ENCODE measurements at regions of chr15 and their contacts with region 1.

Region 1: GRCh38 chr15:74906446-74907162 is at the start of gene FAM219B:
- DNase-seq: peak; percentile 81
- H3K4me3 Mint-ChIP-seq: peak within 1 kb of the TSS; percentile 92
- H3K27ac Mint-ChIP-seq: peak within 1 kb of the TSS; percentile 87
- H3K4me1 Mint-ChIP-seq: peaks cover 44% of the 10 kb centered on the region
- H3K27me3 Mint-ChIP-seq: no peaks in the 10 kb centered on the region
- total RNA-seq, gene FAM219B: 72.6 and 73.2 TPM in 2 replicates

Region 2: DNA sequence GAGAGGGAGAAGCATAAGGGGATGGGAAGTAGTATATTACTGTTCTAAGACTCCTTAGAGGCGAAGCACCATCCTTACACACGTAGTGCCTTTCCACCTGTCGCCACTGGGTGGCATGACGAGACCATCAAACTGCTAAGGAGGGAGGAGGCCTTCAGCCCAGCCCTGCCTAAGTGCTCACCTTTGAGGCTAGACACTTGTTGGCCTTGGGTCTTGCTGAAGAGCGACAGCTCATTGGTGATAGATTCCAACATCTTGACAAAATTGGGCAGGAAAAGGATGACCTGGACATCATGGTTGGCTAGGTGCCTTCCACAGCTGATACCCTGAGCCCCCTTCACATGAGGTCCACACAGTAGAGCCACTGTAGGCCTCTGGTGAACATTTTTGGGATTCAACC is 271.4 kb before region 1 on chr15:
- intact Hi-C with region 1: loop called (anchors 2 kb)
- DNase-seq: peak; percentile 61
- H3K4me3 Mint-ChIP-seq: no peak overlapping the region
- H3K27ac Mint-ChIP-seq: no peak overlapping the region
- H3K4me1 Mint-ChIP-seq: peaks cover 11% of the 10 kb centered on the region
- H3K27me3 Mint-ChIP-seq: no peaks in the 10 kb centered on the region

Region 3: DNA sequence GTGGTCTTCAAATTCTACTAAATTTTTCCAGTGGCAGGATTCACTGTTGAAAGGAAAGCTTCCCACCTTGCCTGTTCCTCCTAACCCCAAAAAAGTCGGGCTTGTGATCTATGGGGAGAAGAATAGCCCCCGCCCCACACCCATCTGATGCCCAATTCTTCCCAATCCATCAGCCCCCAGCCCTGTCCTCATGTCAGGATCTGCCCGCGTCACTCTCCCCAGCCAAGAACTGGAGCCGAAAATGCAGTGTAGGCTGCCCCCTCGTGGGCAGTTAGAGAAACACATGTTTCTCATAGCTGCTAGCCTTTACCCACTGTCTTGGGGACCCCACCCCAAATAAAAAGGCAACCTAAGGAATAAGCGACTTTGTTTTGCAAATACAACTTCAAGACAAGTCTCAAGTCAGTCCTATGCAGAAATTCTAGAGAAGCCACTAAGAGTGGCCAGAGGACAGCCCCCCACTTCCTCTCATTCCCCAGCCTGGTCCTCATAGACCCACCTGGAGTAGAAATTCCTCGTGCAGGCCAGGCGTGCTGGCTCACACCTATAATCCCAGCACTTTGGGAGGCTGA is 137.7 kb before region 1 on chr15:
- intact Hi-C with region 1: loop called (anchors 1 kb)
- DNase-seq: no peak
- H3K4me3 Mint-ChIP-seq: no peak overlapping the region
- H3K27ac Mint-ChIP-seq: no peak overlapping the region
- H3K4me1 Mint-ChIP-seq: peaks cover 34% of the 10 kb centered on the region
- H3K27me3 Mint-ChIP-seq: peaks cover 11% of the 10 kb centered on the region

Region 4: DNA sequence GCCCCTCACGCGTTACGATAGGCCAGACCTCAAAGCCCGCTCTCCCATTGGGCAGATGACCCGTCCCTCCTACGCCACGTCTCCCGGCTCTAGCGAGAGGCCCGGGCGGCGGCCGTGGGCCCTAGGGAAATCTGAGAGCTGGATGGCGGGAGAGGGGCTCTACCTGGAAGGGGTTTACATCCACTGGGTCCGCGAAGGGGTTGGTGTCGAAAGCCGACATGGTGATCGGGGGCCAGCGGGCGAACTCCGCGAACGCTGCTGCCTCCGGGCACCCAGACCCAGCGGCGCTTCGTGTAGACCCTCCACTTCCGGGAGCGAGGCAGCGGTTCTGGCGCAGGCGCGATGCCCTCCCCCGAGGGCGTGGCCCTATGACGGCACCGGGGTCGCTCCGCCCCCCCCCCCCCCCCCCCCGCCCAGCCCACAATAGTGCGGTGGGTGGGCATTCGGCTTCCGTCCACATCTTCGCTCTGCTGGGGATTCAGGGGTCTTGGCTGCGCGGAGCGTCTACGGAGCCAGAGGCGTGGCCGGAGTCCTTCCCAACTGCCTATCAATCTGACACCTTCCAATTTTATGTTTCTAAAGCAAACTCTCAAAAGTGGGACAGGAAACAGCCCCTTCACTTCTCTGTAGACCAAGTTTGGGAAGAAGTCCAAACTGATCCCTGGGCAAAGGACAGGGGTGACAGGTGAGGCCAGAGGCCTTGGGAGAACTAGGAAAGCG is 33.4 kb before region 1 on chr15 and contains the start of gene SCAMP2:
- intact Hi-C with region 1: loop called (anchors 1 kb)
- DNase-seq: peak; percentile 86
- H3K4me3 Mint-ChIP-seq: peak within 1 kb of the TSS; percentile 97
- H3K27ac Mint-ChIP-seq: peak within 1 kb of the TSS; percentile 86
- H3K4me1 Mint-ChIP-seq: peaks cover 34% of the 10 kb centered on the region
- H3K27me3 Mint-ChIP-seq: peaks cover 4% of the 10 kb centered on the region
- total RNA-seq, gene SCAMP2: 93.7 and 103 TPM in 2 replicates

Region 5: DNA sequence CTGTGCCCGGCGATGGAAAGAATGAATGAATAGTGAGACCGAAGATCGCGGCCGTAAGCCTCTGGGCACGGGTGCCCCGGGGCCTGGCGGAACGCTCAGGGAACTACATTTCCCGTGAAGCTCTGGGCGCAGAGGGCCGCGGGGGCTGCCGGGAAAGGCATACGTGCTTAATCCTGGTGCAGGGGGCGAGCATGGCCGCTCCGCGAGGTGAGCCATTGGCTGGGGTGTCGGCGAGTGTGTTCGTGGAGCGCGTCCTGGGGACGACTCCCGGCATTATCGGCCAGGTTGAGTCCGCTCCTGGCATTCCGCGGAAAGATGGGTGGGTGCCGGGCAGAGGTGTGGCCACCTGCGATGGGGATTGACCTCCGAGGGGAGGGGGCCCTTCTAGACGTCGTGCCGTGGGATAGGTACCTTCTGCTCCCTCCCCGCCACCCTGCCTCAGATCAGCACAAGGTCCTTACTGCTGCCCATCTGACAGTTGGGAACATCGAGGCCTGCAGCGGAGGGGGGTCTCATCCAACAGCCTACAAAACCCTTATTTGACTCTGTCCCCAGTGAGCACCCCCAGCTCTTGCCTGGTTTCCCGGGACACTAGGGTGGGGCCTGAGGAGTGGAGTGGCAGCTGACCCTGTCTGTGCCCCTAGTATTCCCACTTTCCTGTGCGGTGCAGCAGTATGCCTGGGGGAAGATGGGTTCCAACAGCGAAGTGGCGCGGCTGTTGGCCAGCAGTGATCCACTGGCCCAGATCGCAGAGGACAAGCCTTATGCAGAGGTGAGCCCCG is 16.5 kb before region 1 on chr15 and contains the start of gene MPI:
- intact Hi-C with region 1: loop called (anchors 1 kb)
- DNase-seq: peak; percentile 82
- H3K4me3 Mint-ChIP-seq: peak within 1 kb of the TSS; percentile 91
- H3K27ac Mint-ChIP-seq: peak within 1 kb of the TSS; percentile 92
- H3K4me1 Mint-ChIP-seq: peaks cover 47% of the 10 kb centered on the region
- H3K27me3 Mint-ChIP-seq: no peaks in the 10 kb centered on the region
- total RNA-seq, gene MPI: 57.7 and 62.8 TPM in 2 replicates

Region 6: GRCh38 chr15:74937596-74938296 is 31.1 kb after region 1 on chr15 and contains the start of gene COX5A:
- intact Hi-C with region 1: loop called (anchors 1 kb)
- DNase-seq: peak; percentile 91
- H3K4me3 Mint-ChIP-seq: peak within 1 kb of the TSS; percentile 91
- H3K27ac Mint-ChIP-seq: peak within 1 kb of the TSS; percentile 91
- H3K4me1 Mint-ChIP-seq: peaks cover 22% of the 10 kb centered on the region
- H3K27me3 Mint-ChIP-seq: no peaks in the 10 kb centered on the region
- total RNA-seq, gene COX5A: 273 and 290 TPM in 2 replicates

Region 7: DNA sequence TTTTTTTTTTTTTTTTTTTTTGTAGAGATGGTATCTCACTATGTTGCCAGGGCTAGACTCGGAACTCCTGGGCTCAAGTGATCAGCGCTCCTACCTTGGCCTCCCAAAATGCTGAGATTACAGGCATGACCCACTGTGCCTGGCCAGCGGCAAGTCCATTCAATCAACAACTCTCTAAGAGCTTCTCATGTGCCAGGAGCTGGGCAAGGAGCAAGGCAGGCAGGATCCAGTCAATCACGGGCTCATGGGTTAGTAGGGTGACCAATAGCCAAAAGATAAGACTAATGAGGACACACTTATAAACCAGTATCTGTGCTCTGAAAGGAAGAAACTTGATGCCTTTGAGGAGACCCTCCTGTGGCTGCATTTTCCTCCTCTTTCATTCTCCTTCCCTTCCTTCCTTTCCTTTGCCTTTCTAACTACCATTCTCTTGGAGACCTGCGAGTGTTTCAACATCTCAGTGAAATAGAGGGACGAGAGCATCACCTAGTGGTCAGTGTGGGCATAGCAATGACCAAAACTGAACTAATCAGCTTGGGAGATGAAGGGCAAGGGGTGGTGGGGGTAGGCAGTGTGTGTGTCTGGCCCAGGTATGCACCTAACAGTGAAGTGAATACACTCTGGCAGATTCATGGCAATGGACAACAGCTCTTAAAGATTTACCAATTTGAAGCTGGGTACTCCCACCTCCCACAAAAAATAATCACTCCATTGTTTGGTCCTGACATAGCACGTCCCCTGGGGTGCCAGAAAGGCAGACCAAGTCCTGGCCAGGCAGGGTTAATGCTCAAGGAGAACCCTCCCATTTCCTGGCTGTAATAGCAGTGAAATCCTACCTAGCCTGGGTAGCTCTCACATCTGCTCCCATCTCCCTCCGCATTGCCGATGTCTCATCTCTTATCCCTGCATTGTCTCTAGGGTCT is 43.7 kb after region 1 on chr15:
- intact Hi-C with region 1: loop called (anchors 1 kb)
- DNase-seq: peak; percentile 71
- H3K4me3 Mint-ChIP-seq: no peak overlapping the region
- H3K27ac Mint-ChIP-seq: no peak overlapping the region
- H3K4me1 Mint-ChIP-seq: peaks cover 11% of the 10 kb centered on the region
- H3K27me3 Mint-ChIP-seq: peaks cover 2% of the 10 kb centered on the region

Region 8: GRCh38 chr15:74995241-74995778 is 88.7 kb after region 1 on chr15 and contains the start of gene SCAMP5:
- intact Hi-C with region 1: no loop called
- DNase-seq: peak; percentile 92
- H3K4me3 Mint-ChIP-seq: peak within 1 kb of the TSS; percentile 70
- H3K27ac Mint-ChIP-seq: no peak within 1 kb of the TSS
- H3K4me1 Mint-ChIP-seq: peaks cover 4% of the 10 kb centered on the region
- H3K27me3 Mint-ChIP-seq: peaks cover 33% of the 10 kb centered on the region
- total RNA-seq, gene SCAMP5: 2.0 and 3.5 TPM in 2 replicates

Region 9: DNA sequence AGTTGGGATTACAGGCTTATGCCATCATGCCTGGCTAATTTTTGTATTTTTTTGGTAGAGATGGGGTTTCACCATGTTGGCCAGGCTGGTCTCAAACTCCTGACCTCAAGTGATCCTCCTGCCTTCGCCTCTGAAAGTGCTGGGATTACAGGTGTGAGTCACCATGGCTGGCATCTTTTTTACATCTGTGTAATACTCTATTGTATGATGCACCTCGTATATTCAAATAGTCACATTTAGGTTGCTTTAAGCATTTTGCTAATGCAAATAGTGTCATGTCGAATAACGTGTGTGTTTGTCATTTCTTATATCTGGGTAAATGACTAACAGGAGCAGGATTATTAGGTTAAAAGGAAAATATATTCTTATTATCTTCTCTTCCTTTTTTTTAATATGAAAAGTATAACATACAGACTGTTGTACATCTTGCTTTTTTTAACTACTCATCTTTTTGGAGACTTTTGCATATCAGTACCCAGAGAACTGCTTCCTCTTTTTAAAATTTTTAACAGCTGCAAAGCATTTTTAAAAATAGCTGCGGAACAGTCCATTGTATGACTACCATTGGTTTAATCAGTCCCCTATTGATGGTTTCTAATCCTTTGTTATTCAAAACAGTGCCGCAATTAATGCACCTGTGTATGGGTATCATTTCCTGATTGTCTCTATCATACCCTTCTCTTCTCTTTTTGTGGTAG is 102.2 kb after region 1 on chr15:
- intact Hi-C with region 1: no loop called
- DNase-seq: no peak
- H3K4me3 Mint-ChIP-seq: no peak overlapping the region
- H3K27ac Mint-ChIP-seq: no peak overlapping the region
- H3K4me1 Mint-ChIP-seq: no peaks in the 10 kb centered on the region
- H3K27me3 Mint-ChIP-seq: peaks cover 16% of the 10 kb centered on the region

Region 10: DNA sequence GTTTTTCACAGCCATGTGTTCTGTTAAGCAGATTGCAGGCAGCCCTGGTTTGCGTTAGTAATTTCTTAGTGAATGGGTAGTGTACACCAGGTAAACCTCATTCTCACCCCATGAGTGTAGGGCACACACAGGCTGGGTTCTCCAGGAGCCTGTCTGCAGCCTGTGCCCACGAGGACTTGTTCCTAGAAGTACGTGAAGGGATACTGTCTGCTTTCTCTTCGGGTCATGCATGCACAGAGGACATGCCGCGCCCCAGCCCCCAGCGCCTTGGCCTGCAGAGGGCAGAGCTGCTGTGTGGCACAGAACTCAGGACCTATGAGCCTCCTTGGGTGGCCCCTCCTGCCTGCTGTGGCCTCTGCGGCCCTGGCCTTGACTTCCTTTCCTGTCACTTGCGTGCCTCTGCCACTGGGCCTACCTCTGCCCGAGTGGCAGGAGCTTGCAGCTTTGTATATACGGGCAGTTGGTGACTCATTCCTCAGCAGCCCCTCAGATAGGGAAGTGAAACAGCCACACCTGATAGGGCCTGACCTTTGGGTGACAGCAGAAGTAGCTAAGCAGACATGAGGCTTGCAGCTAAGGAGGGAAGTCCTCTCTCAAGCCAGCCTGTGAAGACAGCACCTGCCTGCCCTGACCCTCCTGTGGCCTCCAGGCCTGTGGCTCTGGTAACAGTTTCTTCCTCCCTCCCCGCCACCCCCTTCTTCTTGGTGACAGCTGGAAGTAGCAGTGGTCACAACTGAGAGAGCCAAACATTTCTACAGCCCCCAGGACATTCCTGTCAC is 136.3 kb after region 1 on chr15:
- intact Hi-C with region 1: no loop called
- DNase-seq: peak; percentile 71
- H3K4me3 Mint-ChIP-seq: peak overlapping the region; percentile 41
- H3K27ac Mint-ChIP-seq: peak overlapping the region; percentile 77
- H3K4me1 Mint-ChIP-seq: peaks cover 87% of the 10 kb centered on the region
- H3K27me3 Mint-ChIP-seq: no peaks in the 10 kb centered on the region

Region 11: DNA sequence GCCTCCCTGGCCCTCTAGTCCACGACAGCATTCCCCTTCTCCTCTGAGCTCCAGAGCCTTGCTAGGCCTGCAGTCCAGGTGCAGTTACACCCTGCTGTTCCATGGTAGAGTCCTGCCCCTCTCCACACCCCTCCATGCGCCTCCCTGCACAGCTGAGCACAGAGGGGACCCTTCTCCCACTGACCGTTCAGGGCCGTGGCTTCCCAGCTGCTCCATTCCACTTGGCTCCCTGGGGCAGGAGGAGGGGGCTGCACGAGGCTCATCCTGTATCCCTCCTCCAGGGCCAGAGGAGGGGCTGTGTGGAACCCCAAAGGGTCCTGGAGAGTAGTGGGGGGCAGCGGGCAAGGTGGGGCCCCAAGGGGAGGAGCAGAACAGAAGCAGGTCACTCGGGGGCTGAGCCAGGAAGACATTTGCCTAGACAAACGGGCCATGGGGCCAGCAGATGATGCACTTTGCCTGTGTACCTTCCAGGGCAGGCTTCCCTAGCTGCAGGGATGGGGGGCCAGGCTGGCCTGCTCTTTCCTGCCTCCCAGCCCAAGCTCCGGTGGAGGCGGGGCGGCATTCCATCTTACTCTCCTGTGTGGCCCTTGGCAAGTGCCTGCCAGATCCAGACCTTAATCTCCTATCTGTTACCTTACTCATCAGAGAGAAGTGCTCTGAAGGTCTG is 330.8 kb after region 1 on chr15:
- intact Hi-C with region 1: no loop called
- DNase-seq: no peak
- H3K4me3 Mint-ChIP-seq: no peak overlapping the region
- H3K27ac Mint-ChIP-seq: no peak overlapping the region
- H3K4me1 Mint-ChIP-seq: no peaks in the 10 kb centered on the region
- H3K27me3 Mint-ChIP-seq: peaks cover 15% of the 10 kb centered on the region